KBM-7 (cell line): ENCODE measurements at regions of chr1 and their contacts with region 1.

Region 1: DNA sequence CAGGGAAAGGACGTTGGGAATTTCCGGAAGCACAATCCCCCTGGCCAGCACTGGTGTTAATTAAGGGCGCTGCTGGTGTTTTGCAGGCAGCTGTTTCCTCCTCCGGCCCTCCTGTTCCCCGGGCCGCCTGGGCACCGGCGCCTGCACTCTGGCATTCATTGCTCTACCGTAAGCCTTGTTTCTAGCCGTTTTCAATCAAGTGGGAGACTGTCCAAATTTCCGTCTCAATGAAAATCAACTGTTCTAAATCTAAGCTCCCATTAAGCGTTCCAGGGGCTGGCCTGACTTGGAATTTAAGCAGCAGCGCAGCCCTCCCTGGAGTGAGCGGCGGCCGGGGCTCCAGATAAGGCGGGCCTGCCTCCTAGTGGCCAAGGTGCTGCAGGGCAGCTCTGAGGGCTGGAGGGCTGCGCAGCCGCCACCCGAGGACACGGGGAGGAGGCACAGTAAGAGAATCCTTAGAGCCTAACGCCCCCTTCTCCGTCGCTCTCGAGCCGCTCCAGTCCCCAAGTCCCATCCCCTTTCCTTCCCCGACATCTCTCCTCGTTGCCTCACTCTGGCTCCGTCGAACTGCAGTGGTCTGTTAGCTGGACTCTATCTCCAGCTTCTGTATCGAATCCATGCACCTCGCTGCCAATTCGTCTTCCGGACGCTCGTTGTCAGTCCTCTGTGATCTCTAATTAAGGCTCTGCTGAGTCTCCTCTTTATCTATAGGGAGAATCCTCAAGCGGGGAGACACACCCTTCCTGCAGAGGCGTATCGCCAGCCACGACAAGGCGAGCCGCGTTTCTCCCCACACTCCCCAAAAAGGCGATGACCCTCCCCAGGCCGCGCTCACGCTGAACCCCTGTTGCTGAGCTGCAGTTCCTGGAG is 57.8 kb upstream of the LRRC8D start:
- DNase-seq: peak; percentile 92

Region 2: GRCh38 chr1:89524369-89525168 is 238.4 kb before region 1 on chr1 and contains the start of gene LRRC8B:
- in situ Hi-C with region 1: loop called (anchors 25 kb)
- DNase-seq: peak; percentile 88

Region 3: DNA sequence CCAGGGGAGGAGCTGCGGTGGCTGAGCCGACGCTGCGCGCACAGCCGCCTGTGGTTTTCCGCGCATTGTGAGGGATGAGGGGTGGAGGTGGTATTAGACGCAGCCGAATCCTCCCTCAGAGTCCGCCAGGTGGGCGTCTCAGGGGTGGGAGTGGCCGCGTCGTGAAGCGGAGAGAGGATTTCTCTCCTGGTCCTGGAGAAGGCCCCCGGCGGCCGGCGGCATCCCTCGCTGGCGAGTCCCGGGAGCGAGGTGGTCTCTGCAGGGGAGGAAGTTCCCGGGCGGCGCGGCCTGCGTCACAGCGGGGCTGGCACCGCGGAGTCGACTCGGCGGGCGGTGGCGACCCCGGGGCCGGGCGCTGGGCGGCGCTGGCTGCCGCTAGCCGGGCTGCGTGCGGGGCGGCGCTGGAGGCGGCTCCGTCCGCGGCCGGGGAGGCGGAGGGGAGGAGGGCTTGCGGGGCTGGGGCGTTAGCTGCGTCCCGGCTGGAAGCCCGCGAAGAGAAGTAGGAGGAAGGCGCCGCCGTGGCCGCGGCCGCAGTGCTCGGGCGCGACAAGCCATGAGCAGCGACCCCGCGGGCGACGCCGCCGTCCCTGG is 130.3 kb before region 1 on chr1 and contains the start of gene LRRC8C:
- in situ Hi-C with region 1: loop called (anchors 10 kb)
- DNase-seq: peak; percentile 92